HEK293 (cell line): ENCODE measurements at regions of chr3 and their contacts with region 1.

Region 1: GRCh38 chr3:141460097-141460704 is 26.6 kb upstream of the RASA2 start:
- H3K4me3 ChIP-seq: no peak overlapping the region
- H3K27ac ChIP-seq: no peak overlapping the region
- H3K4me1 ChIP-seq: no peaks in the 10 kb centered on the region
- CTCF ChIP-seq: peak; percentile 81

Region 2: GRCh38 chr3:141311496-141312353 is 148.5 kb before region 1 on chr3:
- CTCF ChIA-PET with region 1: interaction called, 23 read pairs
- POLR2A ChIA-PET with region 1: interaction called, 5 read pairs
- H3K4me3 ChIP-seq: peak overlapping the region; percentile 81
- H3K27ac ChIP-seq: no peak overlapping the region; the same call in 1 of the 2 replicates
- H3K4me1 ChIP-seq: no peaks in the 10 kb centered on the region
- CTCF ChIP-seq: peak; percentile 91

Region 3: DNA sequence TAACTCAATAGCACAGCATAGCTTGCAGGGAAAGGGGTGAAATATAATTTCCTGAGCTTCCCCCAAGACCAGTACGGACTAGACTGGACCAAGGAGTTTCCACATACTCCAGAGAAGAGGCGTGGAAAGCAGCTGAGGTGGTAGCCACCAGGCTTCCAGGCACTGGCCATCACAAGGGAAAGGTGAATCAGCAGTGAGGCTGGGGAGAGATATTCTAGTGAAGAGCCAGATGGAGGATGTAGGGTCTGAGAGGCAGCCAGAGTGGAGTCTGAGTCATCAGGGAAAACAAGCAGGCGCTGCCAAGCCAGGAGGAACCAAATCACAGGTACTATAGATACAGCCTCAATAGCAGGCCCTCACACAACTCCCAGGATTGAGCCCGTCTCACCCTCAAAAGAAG is 17.0 kb after region 1 on chr3:
- CTCF ChIA-PET with region 1: interaction called, 11 read pairs
- POLR2A ChIA-PET with region 1: no interaction called
- H3K4me3 ChIP-seq: no peak overlapping the region
- H3K27ac ChIP-seq: no peak overlapping the region
- H3K4me1 ChIP-seq: no peaks in the 10 kb centered on the region
- CTCF ChIP-seq: no peak

Region 4: GRCh38 chr3:141561426-141562034 is 101.3 kb after region 1 on chr3:
- CTCF ChIA-PET with region 1: interaction called, 79 read pairs
- POLR2A ChIA-PET with region 1: no interaction called
- H3K4me3 ChIP-seq: no peak overlapping the region
- H3K27ac ChIP-seq: no peak overlapping the region
- H3K4me1 ChIP-seq: peaks cover 3% of the 10 kb centered on the region; the same call in 1 of the 2 replicates
- CTCF ChIP-seq: 0 out of 2 replicates have a peak, but pooled peaks have one; percentile 24